Thyroid gland (tissue), 4 donors: ENCODE measurements at regions of chr12 and their contacts with region 1.

Region 1: GRCh38 chr12:15151161-15152120 is 69.8 kb downstream of the RERG start:
- DNase-seq: no peak
- H3K4me3 ChIP-seq: no peak overlapping the region
- H3K27ac ChIP-seq: no peak overlapping the region
- H3K4me1 ChIP-seq: no peaks in the 10 kb centered on the region
- H3K27me3 ChIP-seq: no peaks in the 10 kb centered on the region
- CTCF ChIP-seq: peak in 4 of 6 experiments; percentile 7 to 59 (median 51)
- POLR2A ChIP-seq: no peak

Region 2: DNA sequence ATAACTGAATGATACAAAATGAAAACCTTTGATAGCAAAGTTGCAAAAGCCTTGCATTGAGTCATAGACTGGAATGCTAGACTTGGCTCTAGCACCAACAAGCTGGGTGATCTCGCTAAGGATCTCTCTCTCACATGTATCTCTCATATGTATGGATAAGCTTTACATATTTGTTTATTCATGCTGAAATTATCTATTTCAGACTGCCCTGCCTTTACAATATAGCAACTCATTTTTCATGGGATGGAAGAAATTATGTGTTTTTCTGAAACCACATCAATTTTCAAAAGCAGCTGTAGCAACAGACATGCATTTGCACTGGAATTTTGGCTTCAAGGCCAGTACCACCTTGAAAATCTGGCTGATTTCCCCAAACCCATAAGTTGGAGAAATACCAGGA is 58.3 kb after region 1 on chr12:
- intact Hi-C with region 1: loop called (anchors 10 kb)
- DNase-seq: no peak
- H3K4me3 ChIP-seq: no peak overlapping the region
- H3K27ac ChIP-seq: peak overlapping the region in 1 of 3 donors; percentile 15
- H3K4me1 ChIP-seq: no peaks in the 10 kb centered on the region
- H3K27me3 ChIP-seq: no peaks in the 10 kb centered on the region
- CTCF ChIP-seq: no peak
- POLR2A ChIP-seq: no peak

Region 3: GRCh38 chr12:15268927-15269552 is 117.6 kb after region 1 on chr12:
- intact Hi-C with region 1: loop called (anchors 10 kb)
- DNase-seq: peak; percentile 35 to 54
- H3K4me3 ChIP-seq: no peak overlapping the region
- H3K27ac ChIP-seq: no peak overlapping the region
- H3K4me1 ChIP-seq: peaks cover 0 to 3% of the 10 kb centered on the region in 2 donors
- H3K27me3 ChIP-seq: no peaks in the 10 kb centered on the region
- CTCF ChIP-seq: peak; percentile 77 to 93 (median 85)
- POLR2A ChIP-seq: no peak

Region 4: DNA sequence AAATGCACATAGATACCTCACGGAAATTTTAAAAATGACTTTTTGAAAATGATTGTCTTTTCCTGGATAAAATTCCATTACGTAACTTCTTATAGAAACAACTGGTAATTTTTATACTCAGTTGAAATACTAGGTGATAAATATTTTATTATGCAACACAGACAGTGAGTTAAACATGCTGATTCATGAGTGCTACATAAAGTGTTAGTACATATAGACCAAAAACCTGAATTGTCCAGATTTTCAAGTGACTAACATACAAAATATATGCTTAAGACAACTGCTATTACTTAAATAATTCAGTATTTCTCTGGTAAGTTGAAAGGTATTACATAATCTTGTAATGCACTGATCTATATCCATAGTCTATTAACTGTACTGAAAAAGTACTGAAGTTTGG is 182.8 kb after region 1 on chr12:
- intact Hi-C with region 1: no loop called
- DNase-seq: no peak
- H3K4me3 ChIP-seq: no peak overlapping the region
- H3K27ac ChIP-seq: no peak overlapping the region
- H3K4me1 ChIP-seq: no peaks in the 10 kb centered on the region
- H3K27me3 ChIP-seq: no peaks in the 10 kb centered on the region
- CTCF ChIP-seq: no peak
- POLR2A ChIP-seq: no peak

Region 5: DNA sequence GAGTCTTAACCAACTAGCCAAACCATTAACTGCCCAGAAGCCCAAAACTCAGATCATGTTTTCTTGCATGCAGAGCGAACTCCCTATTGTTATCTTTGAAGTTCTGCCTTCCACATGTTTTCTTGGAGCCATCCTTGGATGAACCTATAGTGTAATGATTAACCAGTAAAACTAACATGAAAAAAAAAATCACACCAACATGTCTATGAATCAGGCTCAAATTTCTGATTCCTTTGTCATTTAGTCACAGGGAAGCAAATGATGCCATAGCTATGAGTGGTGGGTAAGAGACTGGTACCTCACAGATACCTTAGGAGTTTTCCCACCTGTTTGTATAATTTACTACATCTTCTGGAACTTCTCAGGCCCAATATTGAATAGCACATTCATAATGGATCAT is 241.6 kb after region 1 on chr12:
- intact Hi-C with region 1: no loop called
- DNase-seq: no peak
- H3K4me3 ChIP-seq: no peak overlapping the region
- H3K27ac ChIP-seq: no peak overlapping the region
- H3K4me1 ChIP-seq: no peaks in the 10 kb centered on the region
- H3K27me3 ChIP-seq: no peaks in the 10 kb centered on the region
- CTCF ChIP-seq: no peak
- POLR2A ChIP-seq: no peak